GM13976 (cell line): ENCODE measurements at regions of chr14 and their contacts with region 1.

Region 1: DNA sequence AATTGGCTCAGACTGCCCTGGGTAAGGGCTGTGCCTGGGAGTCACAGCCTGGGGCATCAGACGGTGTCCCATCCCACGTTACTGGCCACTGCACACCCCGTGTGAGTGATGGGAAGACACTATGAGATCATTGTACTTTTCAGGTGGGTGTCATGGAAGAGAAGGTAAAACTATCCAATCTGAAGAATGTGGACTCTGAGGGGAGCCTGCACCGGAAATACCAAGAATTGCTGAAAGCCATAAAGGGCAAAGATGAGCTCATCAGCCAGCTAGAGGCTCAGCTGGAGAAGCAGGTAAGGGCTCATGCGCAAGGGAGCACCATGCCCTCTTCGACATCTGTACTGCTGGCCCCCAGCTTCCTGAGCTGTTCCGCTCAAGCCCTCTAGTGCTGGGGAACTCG is 24.0 kb downstream of the PLEKHH1 start:
- DNase-seq: no peak
- CTCF ChIP-seq: no peak

Region 2: GRCh38 chr14:67435615-67436346 is 121.3 kb before region 1 on chr14:
- in situ Hi-C with region 1: loop called (anchors 10 kb)
- DNase-seq: no peak
- CTCF ChIP-seq: no peak

Region 3: GRCh38 chr14:68060198-68060597 is 503.1 kb after region 1 on chr14:
- in situ Hi-C with region 1: no loop called
- DNase-seq: no peak
- CTCF ChIP-seq: no peak